Mammary epithelial cell (primary cell): ENCODE measurements at regions of chr11 and their contacts with region 1.

Region 1: GRCh38 chr11:112564228-112564955 is 303.7 kb upstream of the PLET1 start:
- DNase-seq: peak; percentile 19
- H3K4me3 ChIP-seq: no peak overlapping the region
- H3K27ac ChIP-seq: no peak overlapping the region
- H3K4me1 ChIP-seq: no peaks in the 10 kb centered on the region
- H3K27me3 ChIP-seq: peaks cover 4% of the 10 kb centered on the region
- CTCF ChIP-seq: no peak

Region 2: GRCh38 chr11:112655371-112655770 is 91.0 kb after region 1 on chr11:
- CTCF ChIA-PET with region 1: no interaction called
- dilution Hi-C with region 1: loop called (anchors 5 kb)
- in situ Hi-C with region 1: no loop called
- intact Hi-C with region 1: no loop called
- DNase-seq: no peak
- H3K4me3 ChIP-seq: no peak overlapping the region
- H3K27ac ChIP-seq: no peak overlapping the region
- H3K4me1 ChIP-seq: peaks cover 21% of the 10 kb centered on the region
- H3K27me3 ChIP-seq: no peaks in the 10 kb centered on the region
- CTCF ChIP-seq: no peak